CD4-positive, alpha-beta memory T cell (primary cell): ENCODE measurements at regions of chr11 and their contacts with region 1.

Region 1: GRCh38 chr11:82927254-82927880 is 25.8 kb downstream of the DDIAS start:
- DNase-seq: peak; percentile 50 to 71 (median 65)
- H3K4me3 ChIP-seq: no peak overlapping the region
- H3K4me3 Mint-ChIP-seq: no peak overlapping the region
- H3K27ac ChIP-seq: no peak overlapping the region
- H3K27ac Mint-ChIP-seq: peak overlapping the region in 2 of 7 donors; percentile 2 to 57
- H3K4me1 ChIP-seq: peaks cover 8% of the 10 kb centered on the region
- H3K4me1 Mint-ChIP-seq: peaks cover 16 to 22% (median 18%) of the 10 kb centered on the region in 4 donors
- H3K27me3 ChIP-seq: no peaks in the 10 kb centered on the region
- H3K27me3 Mint-ChIP-seq: no peaks in the 10 kb centered on the region

Region 2: GRCh38 chr11:82969811-82970210 is 42.4 kb after region 1 on chr11:
- CTCF ChIA-PET with region 1: interaction called, 6 read pairs
- POLR2A ChIA-PET with region 1: interaction called, 4 read pairs
- intact Hi-C with region 1: loop called (anchors 1 kb)
- DNase-seq: no peak
- H3K4me3 ChIP-seq: no peak overlapping the region
- H3K4me3 Mint-ChIP-seq: peak overlapping the region in 2 of 8 donors; percentile 2 to 43
- H3K27ac ChIP-seq: no peak overlapping the region
- H3K27ac Mint-ChIP-seq: no peak overlapping the region
- H3K4me1 ChIP-seq: peaks cover 7% of the 10 kb centered on the region
- H3K4me1 Mint-ChIP-seq: peaks cover 18 to 39% (median 19%) of the 10 kb centered on the region in 4 donors
- H3K27me3 ChIP-seq: no peaks in the 10 kb centered on the region
- H3K27me3 Mint-ChIP-seq: no peaks in the 10 kb centered on the region

Region 3: DNA sequence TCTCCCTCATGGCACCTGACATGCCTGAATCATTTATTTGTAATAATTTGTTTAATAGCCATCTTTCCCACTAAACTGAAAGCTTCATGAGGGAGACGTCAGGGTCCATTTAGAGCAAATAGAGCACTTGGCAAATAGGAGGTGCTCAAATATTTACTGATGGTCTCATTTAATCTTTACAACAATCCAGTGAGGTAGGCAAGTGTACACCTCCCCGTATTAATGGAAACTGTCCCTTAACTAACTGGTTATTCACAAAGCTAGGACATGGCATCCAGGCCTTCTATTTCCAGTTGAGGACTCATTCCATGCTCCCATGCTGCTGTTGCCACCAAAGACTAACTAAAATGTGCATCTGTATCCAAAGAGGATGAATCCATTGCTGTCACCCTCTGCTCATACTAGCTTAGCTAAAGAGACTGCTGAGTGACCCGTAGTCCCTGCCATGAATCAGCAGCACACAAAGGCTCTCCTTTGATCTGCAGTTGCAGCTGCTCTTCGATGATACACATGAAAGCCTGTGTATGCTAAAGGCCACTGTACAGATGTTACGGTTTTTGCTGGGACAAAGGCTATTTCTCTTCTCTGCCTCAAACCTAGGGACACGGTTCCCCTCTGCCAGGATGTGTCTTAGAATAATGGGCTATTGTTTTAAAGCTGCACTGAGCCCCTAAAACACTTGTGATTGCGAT is 61.7 kb after region 1 on chr11:
- CTCF ChIA-PET with region 1: interaction called, 4 read pairs
- POLR2A ChIA-PET with region 1: no interaction called
- intact Hi-C with region 1: loop called (anchors 1 kb)
- DNase-seq: no peak
- H3K4me3 ChIP-seq: no peak overlapping the region
- H3K4me3 Mint-ChIP-seq: no peak overlapping the region
- H3K27ac ChIP-seq: no peak overlapping the region
- H3K27ac Mint-ChIP-seq: peak overlapping the region in 2 of 7 donors; percentile 14 to 21
- H3K4me1 ChIP-seq: no peaks in the 10 kb centered on the region
- H3K4me1 Mint-ChIP-seq: peaks cover 0 to 6% (median under 1%) of the 10 kb centered on the region in 4 donors
- H3K27me3 ChIP-seq: no peaks in the 10 kb centered on the region
- H3K27me3 Mint-ChIP-seq: no peaks in the 10 kb centered on the region

Region 4: DNA sequence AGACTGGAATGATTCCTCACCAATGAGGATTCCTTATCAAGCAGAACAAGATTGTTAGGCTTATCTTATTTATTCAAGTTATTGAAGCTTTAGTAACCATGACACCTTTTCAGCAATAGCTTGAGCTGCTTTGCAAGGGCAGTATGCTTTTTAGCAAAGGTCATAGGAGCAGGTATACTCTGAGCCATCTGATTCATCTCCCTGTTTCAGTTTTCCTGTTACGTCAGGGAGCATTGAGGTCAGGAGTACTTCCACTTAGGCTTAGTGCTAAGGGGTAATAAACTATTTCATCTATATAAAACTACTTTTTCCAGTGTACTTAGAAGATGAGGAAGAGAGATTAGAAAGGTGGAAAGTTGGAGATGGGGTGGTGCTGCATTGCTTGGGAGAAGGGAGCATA is 248.4 kb after region 1 on chr11:
- CTCF ChIA-PET with region 1: no interaction called
- POLR2A ChIA-PET with region 1: no interaction called
- intact Hi-C with region 1: no loop called
- DNase-seq: no peak
- H3K4me3 ChIP-seq: no peak overlapping the region
- H3K4me3 Mint-ChIP-seq: peak overlapping the region in 2 of 8 donors; percentile 17 to 60
- H3K27ac ChIP-seq: no peak overlapping the region
- H3K27ac Mint-ChIP-seq: peak overlapping the region in 5 of 7 donors; percentile 25 to 65 (median 53)
- H3K4me1 ChIP-seq: peaks cover 69% of the 10 kb centered on the region
- H3K4me1 Mint-ChIP-seq: peaks cover 35 to 64% (median 50%) of the 10 kb centered on the region in 4 donors
- H3K27me3 ChIP-seq: no peaks in the 10 kb centered on the region
- H3K27me3 Mint-ChIP-seq: no peaks in the 10 kb centered on the region